Activated T-helper 2 cell treated with anti-CD3 and anti-CD28 coated beads, Interferon-gamma antibody, Interleukin-2, Interleukin-4, amounts not matched to agents 10 μg/mL and 5 μg/mL and 100 μg/mL, durations not matched to agents 14 hours and 24 hours and 36 hours (primary cell): ENCODE measurements at regions of chr10 and their contacts with region 1.

Region 1: GRCh38 chr10:4034907-4035598 is 250.0 kb upstream of the KLF6 start:
- DNase-seq: peak; percentile 15
- H3K4me3 Mint-ChIP-seq: peak overlapping the region; percentile 61
- H3K27ac Mint-ChIP-seq: peak overlapping the region; percentile 84
- H3K4me1 Mint-ChIP-seq: peaks cover 36% of the 10 kb centered on the region
- H3K27me3 Mint-ChIP-seq: peaks cover 2% of the 10 kb centered on the region

Region 2: GRCh38 chr10:3887885-3888476 is 147.1 kb before region 1 on chr10:
- intact Hi-C with region 1: loop called (anchors 10 kb)
- DNase-seq: no peak
- H3K4me3 Mint-ChIP-seq: peak overlapping the region; percentile 4
- H3K27ac Mint-ChIP-seq: peak overlapping the region; percentile 87
- H3K4me1 Mint-ChIP-seq: peaks cover 49% of the 10 kb centered on the region
- H3K27me3 Mint-ChIP-seq: no peaks in the 10 kb centered on the region

Region 3: GRCh38 chr10:3980660-3981059 is 54.4 kb before region 1 on chr10:
- intact Hi-C with region 1: loop called (anchors 1 kb)
- DNase-seq: no peak
- H3K4me3 Mint-ChIP-seq: no peak overlapping the region
- H3K27ac Mint-ChIP-seq: no peak overlapping the region
- H3K4me1 Mint-ChIP-seq: peaks cover 30% of the 10 kb centered on the region
- H3K27me3 Mint-ChIP-seq: no peaks in the 10 kb centered on the region

Region 4: GRCh38 chr10:4067531-4067930 is 32.5 kb after region 1 on chr10:
- intact Hi-C with region 1: loop called (anchors 2 kb)
- DNase-seq: no peak
- H3K4me3 Mint-ChIP-seq: no peak overlapping the region
- H3K27ac Mint-ChIP-seq: no peak overlapping the region
- H3K4me1 Mint-ChIP-seq: peaks cover 17% of the 10 kb centered on the region
- H3K27me3 Mint-ChIP-seq: no peaks in the 10 kb centered on the region

Region 5: GRCh38 chr10:4093438-4093837 is 58.4 kb after region 1 on chr10:
- intact Hi-C with region 1: no loop called
- DNase-seq: no peak
- H3K4me3 Mint-ChIP-seq: no peak overlapping the region
- H3K27ac Mint-ChIP-seq: no peak overlapping the region
- H3K4me1 Mint-ChIP-seq: peaks cover 2% of the 10 kb centered on the region
- H3K27me3 Mint-ChIP-seq: peaks cover 12% of the 10 kb centered on the region